ENCODE measurements at regions of chr1 and their contacts with region 1.

Region 1: GRCh38 chr1:22052115-22053016 is at the start of gene CDC42:
- DNase-seq: peak; percentile 97 to 99
- ATAC-seq: peak; percentile 97 to 98 (median 98)
- H3K4me3 ChIP-seq: peak within 1 kb of the TSS; percentile 81
- H3K27ac ChIP-seq: peak within 1 kb of the TSS; percentile 100
- H3K4me1 ChIP-seq: peaks cover 34% of the 10 kb centered on the region
- H3K27me3 ChIP-seq: no peaks in the 10 kb centered on the region
- CTCF ChIP-seq: no peak
- total RNA-seq, gene CDC42: 98.7 to 135 (median 122) TPM

Region 2: GRCh38 chr1:22025368-22026155 is 26.8 kb before region 1 on chr1:
- intact Hi-C with region 1: loop called in 1 of 2 experiments (anchors 2 kb)
- DNase-seq: peak; percentile 87 to 90
- ATAC-seq: peak; percentile 95 to 97 (median 96)
- H3K4me3 ChIP-seq: peak overlapping the region; percentile 74
- H3K27ac ChIP-seq: peak overlapping the region; percentile 96
- H3K4me1 ChIP-seq: peaks cover 11% of the 10 kb centered on the region
- H3K27me3 ChIP-seq: no peaks in the 10 kb centered on the region
- CTCF ChIP-seq: no peak

Region 3: GRCh38 chr1:22239378-22239777 is 187.0 kb after region 1 on chr1:
- intact Hi-C with region 1: no loop called
- DNase-seq: no peak
- ATAC-seq: no peak
- H3K4me3 ChIP-seq: no peak overlapping the region
- H3K27ac ChIP-seq: no peak overlapping the region
- H3K4me1 ChIP-seq: no peaks in the 10 kb centered on the region
- H3K27me3 ChIP-seq: peaks cover 0 to 5% (median 0%) of the 10 kb centered on the region in 3 donors
- CTCF ChIP-seq: no peak

Measured in psoas muscle (tissue), 8 donors.